ENCODE measurements at regions of chr6 and their contacts with region 1.

Region 1: DNA sequence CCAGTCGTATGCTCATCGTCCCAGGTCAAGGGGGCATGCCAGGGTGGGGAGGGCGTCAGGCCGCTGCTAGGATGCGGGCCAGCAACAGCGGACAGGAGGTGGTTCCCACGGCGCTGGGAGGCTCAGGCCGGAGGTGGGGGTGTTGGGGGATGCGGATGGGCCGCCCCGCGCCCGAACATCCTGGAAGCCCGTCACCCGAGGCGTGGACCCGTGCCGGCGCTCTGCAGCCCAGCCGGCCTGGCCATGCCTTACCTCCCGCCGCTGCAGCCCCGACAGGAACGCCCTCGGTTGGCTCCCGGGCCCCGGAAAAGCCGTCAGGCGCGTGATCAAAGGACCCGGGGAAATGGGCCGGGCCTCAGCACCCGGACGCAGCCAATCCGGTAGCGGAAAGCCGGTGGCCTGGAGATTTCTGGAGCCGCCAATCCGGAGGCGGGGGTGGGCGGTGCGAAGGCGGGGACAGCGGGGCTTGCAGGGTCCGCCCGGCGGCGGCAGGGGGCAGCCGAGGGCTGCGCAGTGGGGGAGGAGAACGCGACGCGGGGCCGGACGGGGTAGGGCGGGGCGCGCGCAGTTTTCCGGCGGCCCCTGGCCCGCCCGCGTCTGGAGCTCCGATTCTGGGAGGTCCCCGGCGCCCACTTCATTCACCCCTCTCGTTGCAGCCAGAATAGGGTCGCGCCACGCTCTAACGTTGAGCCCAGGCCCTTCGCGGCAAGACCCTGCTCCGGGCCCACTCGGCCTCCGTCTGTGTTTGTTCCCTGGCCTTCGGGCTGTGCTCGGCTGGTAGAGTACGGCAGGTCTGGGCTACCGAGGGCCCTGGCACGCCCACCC is at the start of gene SMIM29:
- DNase-seq: peak; percentile 96
- H3K4me3 ChIP-seq: peak within 1 kb of the TSS; percentile 72 to 81
- H3K27ac ChIP-seq: peak within 1 kb of the TSS; percentile 86 to 93
- H3K4me1 ChIP-seq: no peaks in the 10 kb centered on the region
- H3K27me3 ChIP-seq: no peaks in the 10 kb centered on the region
- CTCF ChIP-seq: peak; percentile 94 to 99 (median 97)
- POLR2A ChIP-seq: peak; percentile 86
- total RNA-seq, gene SMIM29: 25.9 to 41.6 TPM

Region 2: DNA sequence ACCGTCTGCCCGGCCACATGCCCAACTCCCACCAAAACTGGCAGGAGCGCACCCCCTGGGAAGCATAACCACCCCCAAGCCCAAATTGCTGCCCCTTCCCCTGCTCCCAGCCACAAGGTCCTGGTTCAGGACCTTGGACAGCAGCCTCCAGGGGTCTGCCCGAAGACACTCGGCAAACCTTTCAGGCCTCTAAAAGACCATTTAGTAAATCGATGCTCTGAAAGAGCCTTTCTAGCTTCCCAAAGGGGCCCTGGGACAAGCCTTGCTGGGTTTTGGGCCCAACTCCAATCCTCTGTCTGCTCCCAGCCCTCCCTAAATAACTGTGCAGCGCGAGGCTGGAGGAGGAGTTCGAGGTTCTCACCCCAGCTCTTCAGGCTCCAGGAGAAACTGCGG is 133.5 kb before region 1 on chr6:
- intact Hi-C with region 1: no loop called
- DNase-seq: no peak
- H3K4me3 ChIP-seq: no peak overlapping the region
- H3K27ac ChIP-seq: no peak overlapping the region
- H3K4me1 ChIP-seq: no peaks in the 10 kb centered on the region
- H3K27me3 ChIP-seq: peaks cover 3% of the 10 kb centered on the region
- CTCF ChIP-seq: no peak
- POLR2A ChIP-seq: no peak

Region 3: DNA sequence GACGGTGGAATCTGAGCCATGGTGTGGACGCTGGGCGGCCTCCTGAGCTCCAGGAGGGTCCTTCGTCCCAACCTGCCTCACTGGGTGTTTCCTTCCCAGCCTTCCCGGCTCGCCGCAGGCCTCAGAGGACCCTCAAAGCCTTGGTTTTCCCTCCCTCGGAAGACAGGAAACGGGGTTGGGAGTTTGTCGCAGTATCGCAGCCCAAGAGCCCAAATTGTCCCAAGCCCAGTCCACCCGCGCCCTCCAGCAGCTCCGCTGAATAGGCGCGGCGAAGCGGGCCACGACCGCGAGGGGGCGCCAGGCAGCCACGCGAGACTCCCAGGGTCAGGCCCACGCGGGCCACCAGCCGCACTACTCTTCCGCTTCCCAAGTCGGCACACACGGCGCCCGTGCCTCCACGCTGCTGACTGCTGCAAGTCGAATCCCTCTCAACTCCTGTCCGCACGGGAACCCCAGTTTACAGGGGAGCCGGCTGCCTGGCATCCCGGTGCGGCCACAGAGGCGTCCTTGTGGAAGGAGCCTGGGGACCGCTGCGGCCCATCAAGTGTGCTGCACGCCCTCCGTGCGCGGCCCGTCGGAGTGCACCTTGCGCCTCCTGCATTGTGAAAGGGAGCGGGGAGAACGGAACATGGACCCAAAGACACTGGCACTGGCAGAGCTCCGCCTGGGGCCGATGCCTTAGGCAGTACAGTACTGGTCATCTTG is 52.7 kb before region 1 on chr6:
- intact Hi-C with region 1: loop called (anchors 2 kb)
- DNase-seq: peak; percentile 79
- H3K4me3 ChIP-seq: peak overlapping the region; percentile 32 to 41
- H3K27ac ChIP-seq: no peak overlapping the region
- H3K4me1 ChIP-seq: no peaks in the 10 kb centered on the region
- H3K27me3 ChIP-seq: no peaks in the 10 kb centered on the region
- CTCF ChIP-seq: peak; percentile 91 to 98 (median 94)
- POLR2A ChIP-seq: peak; percentile 18

Region 4: DNA sequence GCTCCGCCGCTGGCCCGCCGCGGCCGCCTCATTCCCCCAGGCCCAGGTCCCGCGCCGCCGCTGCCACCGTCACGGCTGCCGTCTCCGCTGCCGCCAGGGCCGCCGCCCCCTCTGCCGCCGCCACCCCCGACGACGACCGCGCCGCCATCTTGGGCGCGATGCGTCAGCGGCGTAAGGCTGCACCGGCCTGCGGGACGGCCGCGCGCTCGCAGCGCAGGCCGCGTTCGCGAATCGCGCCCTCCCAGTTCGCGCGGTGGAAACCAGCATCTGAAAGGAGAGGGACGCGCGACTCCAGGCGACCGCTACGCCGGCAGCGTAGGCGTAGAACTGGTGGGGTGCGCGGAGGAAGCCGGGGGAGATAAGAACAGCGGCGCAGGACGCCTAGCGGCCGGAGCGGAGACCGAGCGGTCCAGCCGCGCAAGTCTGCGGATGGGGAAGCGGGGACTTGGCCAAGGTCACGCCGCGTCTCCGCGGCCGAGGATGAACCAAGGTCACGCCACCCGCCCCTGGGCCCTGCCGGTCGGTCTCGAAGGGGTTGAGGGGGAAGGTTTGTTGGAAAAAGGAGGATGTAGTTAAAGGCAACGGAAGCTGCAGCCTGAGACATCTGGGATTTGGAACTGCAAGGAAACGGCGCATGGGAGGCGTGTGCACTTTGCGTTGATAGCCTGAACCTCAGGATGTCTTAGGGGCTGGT is 143.7 kb after region 1 on chr6 and contains the start of gene NUDT3:
- intact Hi-C with region 1: loop called (anchors 1 kb)
- DNase-seq: peak; percentile 93
- H3K4me3 ChIP-seq: peak within 1 kb of the TSS; percentile 88 to 90
- H3K27ac ChIP-seq: peak within 1 kb of the TSS; percentile 90 to 91
- H3K4me1 ChIP-seq: no peaks in the 10 kb centered on the region
- H3K27me3 ChIP-seq: no peaks in the 10 kb centered on the region
- CTCF ChIP-seq: peak in 3 of 4 experiments; percentile 67 to 94 (median 91)
- POLR2A ChIP-seq: peak; percentile 40
- total RNA-seq, gene NUDT3: 28.9 to 30.8 TPM

Region 5: GRCh38 chr6:34414999-34415858 is 166.3 kb after region 1 on chr6:
- intact Hi-C with region 1: loop called (anchors 2 kb)
- DNase-seq: peak; percentile 74
- H3K4me3 ChIP-seq: no peak overlapping the region
- H3K27ac ChIP-seq: peak overlapping the region; percentile 60 to 65
- H3K4me1 ChIP-seq: peaks cover 7% of the 10 kb centered on the region
- H3K27me3 ChIP-seq: no peaks in the 10 kb centered on the region
- CTCF ChIP-seq: peak; percentile 28 to 94 (median 75)
- POLR2A ChIP-seq: no peak

Region 6: GRCh38 chr6:34608321-34609091 is 359.6 kb after region 1 on chr6:
- intact Hi-C with region 1: loop called (anchors 5 kb)
- DNase-seq: no peak
- H3K4me3 ChIP-seq: no peak overlapping the region
- H3K27ac ChIP-seq: peak overlapping the region; percentile 67 to 76
- H3K4me1 ChIP-seq: peaks cover 10% of the 10 kb centered on the region
- H3K27me3 ChIP-seq: no peaks in the 10 kb centered on the region
- CTCF ChIP-seq: no peak
- POLR2A ChIP-seq: no peak

Measured in prostate gland (tissue), 2 donors.